SK-N-SH (cell line): ENCODE measurements at regions of chr11 and their contacts with region 1.

Region 1: DNA sequence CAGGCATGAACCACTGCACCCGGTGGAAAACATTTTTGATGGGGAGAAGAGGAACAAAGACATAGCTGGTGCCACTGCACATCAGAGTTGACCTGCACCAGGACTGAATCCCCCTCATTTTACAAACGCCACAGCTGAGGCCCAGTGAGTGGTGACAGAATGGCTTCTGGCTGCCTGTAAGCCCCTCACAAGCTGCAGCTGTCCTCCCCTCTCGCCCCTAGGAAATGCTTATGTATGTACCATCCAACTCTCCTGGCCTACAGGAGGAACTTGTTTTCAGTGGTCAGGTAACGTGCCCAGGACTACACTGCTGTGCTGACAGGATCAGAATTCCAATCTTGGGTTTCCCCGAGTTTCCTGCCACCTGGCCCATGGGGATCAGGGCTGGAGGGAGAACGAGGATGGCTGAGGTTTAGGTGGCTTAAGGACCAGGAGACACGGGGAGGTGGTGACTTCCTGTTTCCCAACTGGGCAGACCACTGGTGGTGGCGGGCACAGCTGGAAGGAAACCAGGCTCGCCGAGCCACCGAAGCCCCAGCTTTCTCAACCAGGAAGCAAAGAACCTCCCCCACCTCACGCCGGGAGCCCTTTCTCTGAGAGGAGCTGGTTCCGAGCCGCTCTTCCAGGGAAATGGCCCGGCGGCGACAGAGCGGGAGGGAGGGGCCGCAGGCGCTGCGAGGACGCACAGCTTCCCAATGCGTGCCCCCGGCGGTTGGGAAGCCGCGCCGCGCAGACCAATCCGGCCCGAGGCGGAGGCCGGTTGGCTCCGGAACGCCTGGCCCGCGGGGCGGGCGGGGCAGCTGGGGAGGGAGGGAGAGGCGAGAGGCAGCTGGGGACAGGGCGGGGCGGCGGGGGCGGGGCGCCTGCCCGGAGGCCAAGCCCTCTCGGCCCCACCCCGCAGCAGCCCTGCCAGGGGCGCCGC is 1.0 kb upstream of the LRFN4 start:
- DNase-seq: peak; percentile 96
- H3K4me3 ChIP-seq: peak overlapping the region; percentile 81 to 83
- H3K27ac ChIP-seq: peak overlapping the region; percentile 59 to 76
- H3K4me1 ChIP-seq: peaks cover 0 to 10% of the 10 kb centered on the region in 2 experiments; a peak in 2 of 4 replicates
- H3K27me3 ChIP-seq: no peaks in the 10 kb centered on the region
- CTCF ChIP-seq: no peak
- EP300 ChIP-seq: no peak; a peak in 1 of 4 replicates
- RAD21 ChIP-seq: no peak

Region 2: GRCh38 chr11:66842896-66843775 is 12.7 kb before region 1 on chr11 and contains the start of gene RCE1:
- CTCF ChIA-PET with region 1: interaction called, 4 read pairs
- POLR2A ChIA-PET with region 1: interaction called, 14 read pairs
- DNase-seq: peak; percentile 99
- H3K4me3 ChIP-seq: peak within 1 kb of the TSS; percentile 88 to 91
- H3K27ac ChIP-seq: peak within 1 kb of the TSS; percentile 85 to 90
- H3K4me1 ChIP-seq: peaks cover 13 to 24% of the 10 kb centered on the region in 2 experiments; a peak in 3 of 4 replicates
- H3K27me3 ChIP-seq: no peaks in the 10 kb centered on the region
- CTCF ChIP-seq: no peak
- EP300 ChIP-seq: no peak
- RAD21 ChIP-seq: no peak
- polyA plus RNA-seq, gene RCE1: 25.0 and 25.4 TPM in 2 replicates

Region 3: GRCh38 chr11:66981976-66982578 is 126.2 kb after region 1 on chr11:
- CTCF ChIA-PET with region 1: no interaction called
- POLR2A ChIA-PET with region 1: no interaction called
- DNase-seq: peak; percentile 78
- H3K4me3 ChIP-seq: no peak overlapping the region
- H3K27ac ChIP-seq: peak overlapping the region; percentile 44 to 54
- H3K4me1 ChIP-seq: peaks cover 6 to 9% of the 10 kb centered on the region in 2 experiments; a peak in 2 of 4 replicates
- H3K27me3 ChIP-seq: no peaks in the 10 kb centered on the region
- CTCF ChIP-seq: no peak
- EP300 ChIP-seq: peak in 1 of 2 experiments; percentile 58; a peak in 1 of 4 replicates
- RAD21 ChIP-seq: peak; percentile 2; the same call in 1 of the 2 replicates